ENCODE measurements at regions of chr13 and their contacts with region 1.

Region 1: DNA sequence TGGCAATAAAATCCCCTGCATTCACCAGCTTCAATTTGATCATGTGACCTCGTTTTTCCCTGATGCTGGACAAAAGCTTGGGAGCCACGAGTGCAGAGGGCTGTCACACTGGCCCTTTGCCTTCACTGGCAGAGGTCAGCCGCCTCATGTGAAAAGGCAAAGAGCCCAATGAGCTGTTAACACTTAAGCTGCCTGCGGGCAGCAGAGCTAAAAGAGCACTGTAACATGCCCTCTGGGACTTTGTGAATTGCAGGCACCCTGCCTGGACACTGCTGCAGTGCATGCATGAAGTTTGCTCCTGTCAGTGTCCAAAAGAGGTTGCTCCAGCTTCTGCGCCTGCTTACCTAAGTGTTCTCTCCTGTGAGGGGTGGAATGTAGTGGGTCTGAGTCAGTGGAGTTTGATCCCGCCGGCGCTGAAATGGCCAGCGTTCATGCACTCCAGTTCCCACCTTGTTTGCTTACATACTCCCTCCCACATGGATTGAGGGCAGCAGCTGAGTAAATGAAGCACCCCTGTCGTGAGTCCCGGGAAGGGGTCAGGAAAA is 193.7 kb downstream of the RFC3 start:
- DNase-seq: no peak
- CTCF ChIP-seq: no peak

Region 2: GRCh38 chr13:32707471-32707870 is 1304.1 kb before region 1 on chr13:
- CTCF ChIA-PET with region 1: no interaction called
- POLR2A ChIA-PET with region 1: interaction called, 10 read pairs
- DNase-seq: no peak
- CTCF ChIP-seq: no peak

Region 3: GRCh38 chr13:33787051-33787591 is 224.5 kb before region 1 on chr13:
- CTCF ChIA-PET with region 1: no interaction called
- POLR2A ChIA-PET with region 1: no interaction called
- DNase-seq: peak; percentile 18
- CTCF ChIP-seq: no peak

Region 4: DNA sequence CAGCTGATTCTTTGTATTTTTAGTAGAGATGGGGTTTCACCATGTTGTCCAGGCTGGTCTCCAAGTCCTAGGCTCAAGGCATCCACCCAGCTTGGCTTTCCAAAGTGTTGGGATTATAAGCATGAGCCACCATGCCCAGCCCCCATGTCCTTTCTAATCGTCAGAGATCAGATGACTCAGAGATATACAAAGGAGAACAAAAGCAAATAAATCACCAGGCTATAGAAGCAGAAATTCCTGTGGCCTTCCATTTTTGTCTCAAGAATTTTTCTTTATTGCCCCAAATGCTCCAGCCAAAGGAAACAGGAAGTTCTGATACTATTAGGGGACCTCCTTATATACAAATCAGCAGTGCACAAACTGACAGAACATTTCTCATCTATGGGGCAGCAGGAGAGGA is 14.1 kb after region 1 on chr13:
- CTCF ChIA-PET with region 1: no interaction called
- POLR2A ChIA-PET with region 1: no interaction called
- DNase-seq: no peak
- CTCF ChIP-seq: no peak